H1 (cell line): ENCODE measurements at regions of chr1 and their contacts with region 1.

Region 1: GRCh38 chr1:224356685-224357625 is at the start of gene CNIH4:
- DNase-seq: peak; percentile 75 to 89
- H3K4me3 ChIP-seq: peak within 1 kb of the TSS; percentile 77 to 88 (median 83)
- H3K27ac ChIP-seq: peak within 1 kb of the TSS; percentile 17; the same call in 1 of the 2 replicates
- H3K4me1 ChIP-seq: peaks cover 1 to 6% (median 5%) of the 10 kb centered on the region in 4 experiments; a peak in 4 of 7 replicates
- H3K27me3 ChIP-seq: no peaks in the 10 kb centered on the region
- CTCF ChIP-seq: no peak
- EP300 ChIP-seq: no peak
- POLR2A ChIP-seq: peak; percentile 71 to 84
- RAD21 ChIP-seq: no peak
- total RNA-seq, gene CNIH4: 76.2 and 84.7 TPM in 2 replicates

Region 2: GRCh38 chr1:224317383-224318024 is 39.5 kb before region 1 on chr1:
- CTCF ChIA-PET with region 1: no interaction called
- POLR2A ChIA-PET with region 1: no interaction called
- DNase-seq: no peak
- H3K4me3 ChIP-seq: no peak overlapping the region
- H3K27ac ChIP-seq: no peak overlapping the region
- H3K4me1 ChIP-seq: no peaks in the 10 kb centered on the region
- H3K27me3 ChIP-seq: no peaks in the 10 kb centered on the region
- CTCF ChIP-seq: no peak
- EP300 ChIP-seq: no peak
- POLR2A ChIP-seq: no peak
- RAD21 ChIP-seq: no peak

Region 3: GRCh38 chr1:224338150-224338838 is 18.7 kb before region 1 on chr1:
- CTCF ChIA-PET with region 1: interaction called, 4 read pairs
- POLR2A ChIA-PET with region 1: interaction called, 11 read pairs
- DNase-seq: no peak
- H3K4me3 ChIP-seq: no peak overlapping the region
- H3K27ac ChIP-seq: no peak overlapping the region
- H3K4me1 ChIP-seq: peaks cover 5 to 11% (median 8%) of the 10 kb centered on the region in 4 experiments; a peak in 6 of 7 replicates
- H3K27me3 ChIP-seq: no peaks in the 10 kb centered on the region
- CTCF ChIP-seq: no peak
- EP300 ChIP-seq: no peak
- POLR2A ChIP-seq: no peak
- RAD21 ChIP-seq: no peak